Panc1 (cell line): ENCODE measurements at regions of chr9 and their contacts with region 1.

Region 1: GRCh38 chr9:136002881-136003280 is 41.7 kb upstream of the UBAC1 start:
- DNase-seq: no peak
- ATAC-seq: peak; percentile 24; the same call in 1 of the 2 replicates
- H3K4me3 ChIP-seq: no peak overlapping the region
- H3K27ac ChIP-seq: no peak overlapping the region
- H3K4me1 ChIP-seq: peaks cover 23% of the 10 kb centered on the region
- H3K27me3 ChIP-seq: no peaks in the 10 kb centered on the region
- CTCF ChIP-seq: no peak

Region 2: DNA sequence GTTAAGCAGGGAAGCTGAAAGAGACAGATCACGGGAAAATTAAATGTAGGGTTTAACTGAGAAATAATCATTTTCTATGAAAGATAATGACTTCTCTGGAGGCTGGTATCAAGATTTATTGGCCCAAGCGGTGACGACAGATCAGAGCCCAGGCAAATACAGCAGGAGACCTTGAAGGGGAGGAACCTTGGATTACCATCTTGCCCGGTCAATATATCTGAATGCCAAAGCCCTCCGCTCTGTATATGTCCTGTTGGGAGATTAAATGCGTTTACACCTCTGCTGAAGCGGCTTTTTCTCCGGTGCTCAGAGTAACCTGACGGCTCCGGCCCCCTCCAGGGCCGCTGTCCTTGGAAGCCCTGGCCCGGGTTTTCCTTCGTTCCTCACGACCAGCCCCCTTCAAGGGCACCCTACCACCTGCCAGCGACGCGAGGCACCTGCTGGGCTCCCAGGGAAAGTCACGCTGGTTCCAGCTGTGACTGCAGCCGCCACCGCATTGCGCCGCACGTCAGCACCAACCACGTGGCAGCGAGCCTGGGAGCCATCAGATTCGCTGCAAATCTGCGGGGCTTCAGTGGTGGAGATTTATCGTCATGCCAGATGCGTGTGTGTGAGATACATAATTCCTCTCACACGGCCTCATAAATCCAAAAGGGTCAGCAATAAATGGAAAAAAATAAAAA is 247.1 kb after region 1 on chr9:
- CTCF ChIA-PET with region 1: no interaction called
- POLR2A ChIA-PET with region 1: interaction called, 25 read pairs
- in situ Hi-C with region 1: no loop called
- intact Hi-C with region 1: no loop called
- DNase-seq: no peak
- ATAC-seq: no peak
- H3K4me3 ChIP-seq: no peak overlapping the region
- H3K27ac ChIP-seq: no peak overlapping the region
- H3K4me1 ChIP-seq: 0 out of 2 replicates have a peak, but pooled peaks cover 3% of the 10 kb centered on the region
- H3K27me3 ChIP-seq: no peaks in the 10 kb centered on the region
- CTCF ChIP-seq: no peak